PC-9 (cell line): ENCODE measurements at regions of chr22 and their contacts with region 1.

Region 1: GRCh38 chr22:19579115-19579811 is 55.1 kb upstream of the CLDN5 start:
- DNase-seq: no peak
- H3K4me3 ChIP-seq: no peak overlapping the region
- H3K27ac ChIP-seq: no peak overlapping the region
- H3K4me1 ChIP-seq: peaks cover 13% of the 10 kb centered on the region
- H3K27me3 ChIP-seq: no peaks in the 10 kb centered on the region
- CTCF ChIP-seq: no peak

Region 2: DNA sequence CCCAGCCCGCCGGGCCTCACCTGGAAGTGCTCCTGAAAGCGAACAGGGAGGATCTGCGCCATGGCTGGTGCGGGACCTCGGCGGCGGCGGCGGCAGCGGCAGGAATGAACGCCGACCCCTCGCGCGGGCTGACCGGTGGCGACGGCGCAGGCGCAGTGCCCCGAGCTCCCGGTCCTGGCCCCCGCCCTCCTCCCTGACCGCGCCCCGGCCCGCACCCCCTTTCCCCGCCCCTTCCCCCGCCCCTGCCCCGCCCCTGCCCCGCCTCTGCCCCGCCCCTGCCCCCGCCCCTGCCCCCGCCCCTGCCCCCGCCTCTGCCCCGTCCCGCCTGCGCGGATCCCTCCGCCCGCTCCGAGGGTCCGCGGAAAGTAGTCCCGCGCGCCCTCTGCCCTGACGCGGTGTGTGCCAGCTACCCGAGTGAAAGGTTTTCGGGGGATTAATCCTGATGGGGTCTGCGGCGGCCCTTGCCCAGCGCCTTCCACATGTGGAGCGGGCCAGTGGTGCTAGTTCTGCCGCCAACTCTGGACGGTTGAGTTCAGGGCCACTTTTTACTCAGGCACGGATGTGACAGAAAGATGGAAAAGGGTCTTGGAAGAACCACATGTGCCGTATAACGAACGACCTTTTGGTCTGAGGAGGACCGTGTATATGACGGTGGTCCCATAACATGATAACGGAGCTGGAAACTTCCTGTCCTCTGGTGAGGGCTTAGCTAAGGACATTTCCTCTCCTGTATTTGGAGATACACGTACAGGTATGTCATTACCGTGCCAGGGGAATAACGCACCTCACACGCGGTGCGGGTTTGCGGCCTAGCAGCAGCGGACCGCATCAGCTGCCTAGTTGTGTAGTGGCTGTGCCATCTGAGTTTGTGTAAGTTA is 287.4 kb before region 1 on chr22 and contains the start of gene CLTCL1:
- CTCF ChIA-PET with region 1: interaction called, 16 read pairs
- POLR2A ChIA-PET with region 1: no interaction called
- intact Hi-C with region 1: no loop called
- DNase-seq: peak in 1 of 2 experiments; percentile 66
- H3K4me3 ChIP-seq: peak within 1 kb of the TSS; percentile 75
- H3K27ac ChIP-seq: no peak within 1 kb of the TSS
- H3K4me1 ChIP-seq: no peaks in the 10 kb centered on the region
- H3K27me3 ChIP-seq: no peaks in the 10 kb centered on the region
- CTCF ChIP-seq: no peak
- total RNA-seq, gene CLTCL1: 6.6 and 7.2 TPM in 2 replicates

Region 3: GRCh38 chr22:19455585-19456370 is 123.5 kb before region 1 on chr22:
- CTCF ChIA-PET with region 1: no interaction called
- POLR2A ChIA-PET with region 1: no interaction called
- intact Hi-C with region 1: no loop called
- DNase-seq: no peak
- H3K4me3 ChIP-seq: no peak overlapping the region
- H3K27ac ChIP-seq: no peak overlapping the region
- H3K4me1 ChIP-seq: no peaks in the 10 kb centered on the region
- H3K27me3 ChIP-seq: no peaks in the 10 kb centered on the region
- CTCF ChIP-seq: no peak